Activated CD4-positive, alpha-beta memory T cell treated with anti-CD3 and anti-CD28 coated beads for 36 hours (primary cell): ENCODE measurements at regions of chr1 and their contacts with region 1.

Region 1: GRCh38 chr1:41802532-41803501 is 115.9 kb downstream of the HIVEP3 start:
- DNase-seq: no peak
- H3K4me3 Mint-ChIP-seq: no peak overlapping the region
- H3K27ac Mint-ChIP-seq: peak overlapping the region; percentile 79
- H3K4me1 Mint-ChIP-seq: peaks cover 83% of the 10 kb centered on the region
- H3K27me3 Mint-ChIP-seq: no peaks in the 10 kb centered on the region

Region 2: GRCh38 chr1:41573785-41574713 is 228.8 kb before region 1 on chr1:
- CTCF ChIA-PET with region 1: interaction called, 5 read pairs
- POLR2A ChIA-PET with region 1: no interaction called
- intact Hi-C with region 1: loop called (anchors 1 kb)
- DNase-seq: peak; percentile 88
- H3K4me3 Mint-ChIP-seq: no peak overlapping the region
- H3K27ac Mint-ChIP-seq: no peak overlapping the region
- H3K4me1 Mint-ChIP-seq: peaks cover 22% of the 10 kb centered on the region
- H3K27me3 Mint-ChIP-seq: no peaks in the 10 kb centered on the region

Region 3: DNA sequence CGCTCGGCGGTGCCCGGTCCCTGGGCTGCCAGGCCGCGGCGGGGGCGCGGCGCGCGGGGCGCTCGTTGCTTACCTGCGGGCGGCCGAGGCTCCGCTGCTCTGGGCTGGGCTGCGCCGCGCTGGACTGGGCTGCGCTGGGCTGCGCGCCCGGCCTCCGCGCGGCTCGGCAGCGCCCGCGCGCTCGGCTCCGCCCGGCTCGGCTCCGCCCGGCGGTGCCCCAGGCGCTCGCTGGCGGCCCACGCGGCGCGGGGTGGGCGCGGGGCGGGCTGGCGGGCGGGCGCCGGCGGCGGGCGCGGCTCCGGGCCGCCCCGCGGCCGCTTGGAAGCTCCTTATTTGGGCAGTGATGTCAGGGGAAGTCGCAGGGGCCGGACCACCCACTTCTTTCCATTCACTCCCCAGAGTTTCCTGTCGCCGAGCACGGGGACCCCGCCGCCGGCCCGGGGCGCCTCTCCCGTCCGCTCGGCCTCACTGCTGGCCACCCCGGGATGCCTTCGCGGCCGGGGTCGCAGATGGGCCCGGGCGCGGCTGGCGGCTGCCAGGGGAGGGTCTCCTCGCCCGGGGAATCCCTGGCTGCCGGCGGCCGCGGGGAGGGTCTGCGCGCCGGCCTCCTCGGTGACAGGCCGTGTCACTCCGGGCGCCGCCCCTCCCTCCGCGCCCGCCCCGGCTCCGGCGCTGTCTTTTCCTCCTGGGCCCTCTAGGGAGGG is 140.6 kb before region 1 on chr1:
- CTCF ChIA-PET with region 1: no interaction called
- POLR2A ChIA-PET with region 1: no interaction called
- intact Hi-C with region 1: loop called (anchors 2 kb)
- DNase-seq: peak; percentile 88
- H3K4me3 Mint-ChIP-seq: peak overlapping the region; percentile 71
- H3K27ac Mint-ChIP-seq: peak overlapping the region; percentile 80
- H3K4me1 Mint-ChIP-seq: peaks cover 78% of the 10 kb centered on the region
- H3K27me3 Mint-ChIP-seq: no peaks in the 10 kb centered on the region

Region 4: GRCh38 chr1:41713557-41714327 is 89.1 kb before region 1 on chr1:
- CTCF ChIA-PET with region 1: no interaction called
- POLR2A ChIA-PET with region 1: no interaction called
- intact Hi-C with region 1: no loop called
- DNase-seq: no peak
- H3K4me3 Mint-ChIP-seq: no peak overlapping the region
- H3K27ac Mint-ChIP-seq: no peak overlapping the region
- H3K4me1 Mint-ChIP-seq: peaks cover 9% of the 10 kb centered on the region
- H3K27me3 Mint-ChIP-seq: no peaks in the 10 kb centered on the region

Region 5: GRCh38 chr1:41783189-41783639 is 19.6 kb before region 1 on chr1:
- CTCF ChIA-PET with region 1: interaction called, 3 read pairs
- POLR2A ChIA-PET with region 1: interaction called, 5 read pairs
- intact Hi-C with region 1: loop called (anchors 1 kb)
- DNase-seq: peak; percentile 76
- H3K4me3 Mint-ChIP-seq: no peak overlapping the region
- H3K27ac Mint-ChIP-seq: peak overlapping the region; percentile 68
- H3K4me1 Mint-ChIP-seq: peaks cover 29% of the 10 kb centered on the region
- H3K27me3 Mint-ChIP-seq: no peaks in the 10 kb centered on the region

Region 6: GRCh38 chr1:41898191-41898713 is 95.4 kb after region 1 on chr1:
- CTCF ChIA-PET with region 1: no interaction called
- POLR2A ChIA-PET with region 1: no interaction called
- intact Hi-C with region 1: loop called (anchors 5 kb)
- DNase-seq: peak; percentile 91
- H3K4me3 Mint-ChIP-seq: peak overlapping the region; percentile 65
- H3K27ac Mint-ChIP-seq: peak overlapping the region; percentile 97
- H3K4me1 Mint-ChIP-seq: peaks cover 77% of the 10 kb centered on the region
- H3K27me3 Mint-ChIP-seq: no peaks in the 10 kb centered on the region